Esophagus muscularis mucosa (tissue), 4 donors: ENCODE measurements at regions of chr14 and their contacts with region 1.

Region 1: GRCh38 chr14:50452979-50453705 is 56.5 kb upstream of the CDKL1 start:
- DNase-seq: no peak
- H3K4me3 ChIP-seq: no peak overlapping the region
- H3K27ac ChIP-seq: peak overlapping the region; percentile 29 to 58 (median 34)
- H3K4me1 ChIP-seq: peaks cover 0 to 9% (median 7%) of the 10 kb centered on the region in 4 donors
- H3K27me3 ChIP-seq: no peaks in the 10 kb centered on the region
- CTCF ChIP-seq: no peak
- EP300 ChIP-seq: no peak
- POLR2A ChIP-seq: no peak

Region 2: GRCh38 chr14:50335389-50335788 is 117.8 kb before region 1 on chr14:
- intact Hi-C with region 1: loop called (anchors 10 kb)
- DNase-seq: peak; percentile 82
- H3K4me3 ChIP-seq: no peak overlapping the region
- H3K27ac ChIP-seq: peak overlapping the region; percentile 35 to 73 (median 62)
- H3K4me1 ChIP-seq: peaks cover 24 to 30% (median 26%) of the 10 kb centered on the region in 4 donors
- H3K27me3 ChIP-seq: no peaks in the 10 kb centered on the region
- CTCF ChIP-seq: no peak
- EP300 ChIP-seq: no peak
- POLR2A ChIP-seq: no peak